ENCODE measurements at regions of chr15 and their contacts with region 1.

Region 1: GRCh38 chr15:43808960-43809678 is 8.7 kb downstream of the HYPK start:
- DNase-seq: no peak
- ATAC-seq: no peak
- H3K4me3 ChIP-seq: no peak overlapping the region
- H3K27ac ChIP-seq: no peak overlapping the region
- H3K4me1 ChIP-seq: no peaks in the 10 kb centered on the region
- H3K27me3 ChIP-seq: no peaks in the 10 kb centered on the region
- CTCF ChIP-seq: no peak

Region 2: DNA sequence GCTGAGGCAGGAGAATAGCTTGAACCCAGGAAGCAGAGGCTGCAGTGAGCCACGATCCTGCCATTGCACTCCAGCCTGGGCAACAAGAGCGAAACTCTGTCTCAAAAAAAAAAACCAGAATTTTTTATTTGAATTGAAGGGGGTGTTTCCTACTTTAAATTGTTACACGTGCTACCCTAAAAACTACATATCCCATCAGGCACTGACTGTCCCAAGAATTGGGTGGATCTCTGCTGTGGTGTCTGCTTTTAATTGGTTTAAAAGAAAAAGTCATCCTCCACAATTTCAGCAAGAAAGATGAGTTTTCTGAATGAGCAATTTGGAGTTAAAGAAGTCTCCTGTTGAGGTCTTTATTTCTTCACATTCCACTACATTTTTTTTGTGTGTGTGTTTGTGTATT is 60.7 kb before region 1 on chr15:
- CTCF ChIA-PET with region 1: no interaction called
- POLR2A ChIA-PET with region 1: no interaction called
- intact Hi-C with region 1: no loop called
- DNase-seq: peak; percentile 19
- ATAC-seq: no peak
- H3K4me3 ChIP-seq: peak overlapping the region; percentile 81
- H3K27ac ChIP-seq: no peak overlapping the region
- H3K4me1 ChIP-seq: peaks cover 16% of the 10 kb centered on the region
- H3K27me3 ChIP-seq: no peaks in the 10 kb centered on the region
- CTCF ChIP-seq: no peak

Region 3: GRCh38 chr15:43791993-43792760 is 16.9 kb before region 1 on chr15 and contains the start of gene SERF2:
- CTCF ChIA-PET with region 1: no interaction called
- POLR2A ChIA-PET with region 1: interaction called, 14 read pairs
- intact Hi-C with region 1: no loop called
- DNase-seq: peak; percentile 99
- ATAC-seq: peak; percentile 96
- H3K4me3 ChIP-seq: peak within 1 kb of the TSS; percentile 96
- H3K27ac ChIP-seq: peak within 1 kb of the TSS; percentile 74
- H3K4me1 ChIP-seq: peaks cover 36% of the 10 kb centered on the region
- H3K27me3 ChIP-seq: no peaks in the 10 kb centered on the region
- CTCF ChIP-seq: no peak
- total RNA-seq, gene SERF2: 665 and 756 TPM in 2 replicates

Region 4: DNA sequence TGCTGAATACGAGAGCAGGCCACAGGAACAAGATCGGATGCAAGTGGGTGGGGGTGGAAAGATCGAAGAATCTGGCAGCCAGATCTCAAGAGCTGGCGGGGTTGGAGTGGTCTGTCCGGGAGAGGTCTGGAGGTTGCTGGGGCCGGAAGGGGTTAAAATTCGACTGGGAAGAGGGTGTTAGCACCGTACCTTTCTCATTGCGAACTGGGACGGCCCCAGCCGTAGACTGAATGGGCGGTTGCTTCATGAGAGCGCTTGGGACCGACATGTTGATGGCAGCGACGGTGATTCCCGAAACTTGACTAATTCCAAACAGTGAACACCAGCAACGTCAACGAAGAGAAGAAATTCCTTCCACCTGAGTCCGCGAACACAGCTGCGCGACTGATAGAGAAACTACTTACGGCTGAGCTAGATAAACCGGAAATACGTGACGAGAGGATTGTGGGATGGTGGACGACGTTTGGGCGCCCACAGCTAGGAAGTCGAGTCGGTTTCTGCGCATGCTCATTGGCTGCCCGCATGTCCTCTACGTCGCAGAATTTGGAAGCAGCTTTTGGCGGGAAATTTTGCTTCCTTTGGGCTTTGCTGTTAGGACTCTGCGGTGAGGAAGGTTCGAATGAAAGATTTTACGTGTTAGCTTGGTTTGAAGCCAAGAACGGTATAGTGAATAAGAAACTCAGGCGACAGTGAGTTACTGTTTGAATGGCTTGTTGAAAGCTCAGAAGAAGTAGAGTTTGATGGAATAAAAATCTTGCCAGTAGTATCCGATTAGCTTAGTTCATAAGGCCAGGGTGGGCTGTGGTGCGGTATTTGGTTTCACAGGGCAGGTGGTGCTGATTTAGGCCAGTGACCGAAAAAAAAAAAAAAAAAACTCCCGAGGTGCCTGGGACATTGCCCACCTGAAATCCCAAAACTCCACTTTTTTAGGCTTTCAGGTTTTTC is 15.5 kb after region 1 on chr15 and contains the start of gene MFAP1:
- CTCF ChIA-PET with region 1: no interaction called
- POLR2A ChIA-PET with region 1: interaction called, 10 read pairs
- intact Hi-C with region 1: no loop called
- DNase-seq: peak; percentile 97
- ATAC-seq: peak; percentile 75
- H3K4me3 ChIP-seq: peak within 1 kb of the TSS; percentile 91
- H3K27ac ChIP-seq: peak within 1 kb of the TSS; percentile 85
- H3K4me1 ChIP-seq: peaks cover 34% of the 10 kb centered on the region
- H3K27me3 ChIP-seq: no peaks in the 10 kb centered on the region
- CTCF ChIP-seq: no peak
- total RNA-seq, gene MFAP1: 18.5 and 18.6 TPM in 2 replicates

Region 5: DNA sequence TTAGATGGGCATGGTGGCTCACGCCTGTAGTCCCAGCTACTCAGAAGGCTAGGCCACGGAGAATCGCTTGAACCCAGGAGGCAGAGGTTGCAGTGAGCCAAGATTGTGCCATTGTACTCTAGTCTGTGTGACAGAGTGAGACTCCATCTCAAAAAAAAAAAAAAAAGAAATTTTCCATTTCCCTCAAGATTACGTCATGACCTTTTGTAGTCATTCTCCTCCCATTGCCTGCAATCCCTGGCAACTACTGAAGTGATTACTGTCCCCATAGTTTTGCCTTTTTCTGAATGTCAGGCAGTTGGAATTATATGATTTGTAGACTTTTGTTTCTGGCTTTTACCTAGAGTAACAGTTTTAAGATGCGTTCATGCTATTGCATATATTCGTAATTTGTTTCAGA is 45.7 kb after region 1 on chr15:
- CTCF ChIA-PET with region 1: no interaction called
- POLR2A ChIA-PET with region 1: no interaction called
- intact Hi-C with region 1: no loop called
- DNase-seq: no peak
- ATAC-seq: no peak
- H3K4me3 ChIP-seq: no peak overlapping the region
- H3K27ac ChIP-seq: no peak overlapping the region
- H3K4me1 ChIP-seq: no peaks in the 10 kb centered on the region
- H3K27me3 ChIP-seq: no peaks in the 10 kb centered on the region
- CTCF ChIP-seq: no peak

Region 6: DNA sequence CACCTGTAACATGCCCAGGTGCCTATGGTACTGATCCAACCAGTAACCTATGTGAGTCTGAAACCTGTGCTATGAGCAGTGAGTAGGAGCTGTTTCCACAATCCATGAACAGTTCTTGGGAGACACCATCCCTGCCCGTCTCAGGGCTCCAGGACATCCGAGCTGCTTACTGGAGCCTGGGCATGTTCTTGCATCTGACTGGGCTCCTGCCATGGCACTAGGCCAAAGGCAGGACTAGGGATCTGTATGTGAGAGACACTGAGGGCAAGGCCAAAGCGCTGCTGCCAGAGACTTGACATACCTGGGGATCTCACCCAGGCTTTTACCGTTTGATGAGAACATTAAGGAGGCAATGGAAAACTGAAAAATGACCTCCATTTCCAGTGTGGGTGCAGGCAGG is 77.4 kb after region 1 on chr15:
- CTCF ChIA-PET with region 1: no interaction called
- POLR2A ChIA-PET with region 1: no interaction called
- intact Hi-C with region 1: no loop called
- DNase-seq: no peak
- ATAC-seq: no peak
- H3K4me3 ChIP-seq: no peak overlapping the region
- H3K27ac ChIP-seq: no peak overlapping the region
- H3K4me1 ChIP-seq: no peaks in the 10 kb centered on the region
- H3K27me3 ChIP-seq: no peaks in the 10 kb centered on the region
- CTCF ChIP-seq: no peak

Region 7: DNA sequence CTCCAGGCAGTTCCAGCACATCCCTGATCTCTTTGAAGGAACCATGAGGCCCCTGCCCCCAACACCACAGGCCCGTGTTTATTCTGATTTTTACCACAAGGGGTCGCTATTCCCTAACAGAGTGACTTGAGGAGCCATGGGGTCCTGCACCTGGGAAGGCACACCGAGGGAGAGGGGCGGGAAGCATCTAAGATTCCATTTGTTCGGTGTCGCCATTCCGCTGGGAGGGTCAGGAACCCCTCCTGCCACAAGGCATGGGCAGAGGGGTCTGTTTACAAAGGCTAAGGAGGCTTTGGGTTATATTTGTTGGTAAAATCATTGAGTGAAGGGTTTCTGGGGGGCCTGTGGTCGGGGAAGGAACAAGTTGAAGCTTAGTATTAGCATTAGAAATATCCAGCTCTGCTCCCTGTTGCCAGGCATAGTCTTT is 94.8 kb after region 1 on chr15:
- CTCF ChIA-PET with region 1: no interaction called
- POLR2A ChIA-PET with region 1: no interaction called
- intact Hi-C with region 1: no loop called
- DNase-seq: peak; percentile 90
- ATAC-seq: peak; percentile 90
- H3K4me3 ChIP-seq: no peak overlapping the region
- H3K27ac ChIP-seq: no peak overlapping the region
- H3K4me1 ChIP-seq: peaks cover 11% of the 10 kb centered on the region
- H3K27me3 ChIP-seq: no peaks in the 10 kb centered on the region
- CTCF ChIP-seq: peak; percentile 96